Mammary epithelial cell (primary cell): ENCODE measurements at regions of chr3 and their contacts with region 1.

Region 1: GRCh38 chr3:168801794-168802193 is 706.1 kb upstream of the GOLIM4 start:
- DNase-seq: peak; percentile 56
- H3K4me3 ChIP-seq: no peak overlapping the region
- H3K27ac ChIP-seq: no peak overlapping the region
- H3K4me1 ChIP-seq: peaks cover 11% of the 10 kb centered on the region
- H3K27me3 ChIP-seq: no peaks in the 10 kb centered on the region
- CTCF ChIP-seq: no peak

Region 2: DNA sequence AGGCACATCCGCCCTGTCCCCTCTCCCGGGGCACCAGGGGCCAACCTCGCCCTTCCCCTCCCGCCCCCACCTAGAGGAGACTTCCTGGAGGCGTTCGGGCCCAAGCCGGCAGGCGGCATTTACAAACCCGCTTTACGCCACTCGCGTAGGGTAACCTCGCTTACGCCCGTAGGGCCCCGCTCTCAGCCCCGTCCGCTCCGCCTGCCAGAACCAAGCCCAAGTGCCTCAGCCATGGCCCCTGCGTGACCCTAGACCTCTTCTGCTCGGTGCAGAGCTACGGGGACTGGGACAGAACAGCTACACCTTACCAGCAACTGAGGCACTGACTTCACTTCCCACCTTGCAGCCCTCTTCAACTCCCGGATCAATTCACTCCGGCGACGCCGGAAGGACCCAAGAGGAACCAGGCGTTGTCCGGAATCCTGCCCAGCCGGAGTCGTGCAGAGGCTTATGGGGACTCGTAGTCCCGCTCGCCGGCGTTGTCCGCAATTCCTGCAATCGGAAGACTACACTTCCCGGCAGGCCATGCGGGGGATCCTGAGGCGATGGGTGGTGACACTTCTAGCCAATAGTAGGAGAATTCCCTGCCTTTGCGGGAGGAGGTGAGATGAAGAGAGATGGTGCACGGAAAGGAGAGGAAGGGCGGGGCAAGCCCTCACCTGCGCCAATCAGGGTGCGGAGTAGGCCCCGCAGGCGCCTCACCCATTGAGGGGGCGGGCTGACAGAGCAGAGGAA is 1067.1 kb before region 1 on chr3 and contains the start of gene PDCD10:
- CTCF ChIA-PET with region 1: interaction called, 30 read pairs
- dilution Hi-C with region 1: no loop called
- in situ Hi-C with region 1: no loop called
- intact Hi-C with region 1: no loop called
- DNase-seq: peak; percentile 99
- H3K4me3 ChIP-seq: peak within 1 kb of the TSS; percentile 84 to 97 (median 89)
- H3K27ac ChIP-seq: peak within 1 kb of the TSS; percentile 79
- H3K4me1 ChIP-seq: no peaks in the 10 kb centered on the region
- H3K27me3 ChIP-seq: no peaks in the 10 kb centered on the region
- CTCF ChIP-seq: no peak
- total RNA-seq, gene PDCD10: 70.8 to 76.1 TPM